ENCODE measurements at regions of chr22 and their contacts with region 1.

Region 1: GRCh38 chr22:19377565-19378343 is 53.8 kb downstream of the HIRA start:
- DNase-seq: no peak
- H3K4me3 ChIP-seq: no peak overlapping the region
- H3K27ac ChIP-seq: no peak overlapping the region
- H3K4me1 ChIP-seq: no peaks in the 10 kb centered on the region
- H3K27me3 ChIP-seq: no peaks in the 10 kb centered on the region
- CTCF ChIP-seq: no peak
- POLR2A ChIP-seq: no peak

Region 2: GRCh38 chr22:19410941-19411689 is 33.4 kb after region 1 on chr22:
- intact Hi-C with region 1: loop called (anchors 2 kb)
- DNase-seq: no peak
- H3K4me3 ChIP-seq: no peak overlapping the region
- H3K27ac ChIP-seq: no peak overlapping the region
- H3K4me1 ChIP-seq: no peaks in the 10 kb centered on the region
- H3K27me3 ChIP-seq: no peaks in the 10 kb centered on the region
- CTCF ChIP-seq: no peak
- POLR2A ChIP-seq: no peak

Measured in breast epithelium (tissue), 4 donors.